ENCODE measurements at regions of chr5 and their contacts with region 1.

Region 1: DNA sequence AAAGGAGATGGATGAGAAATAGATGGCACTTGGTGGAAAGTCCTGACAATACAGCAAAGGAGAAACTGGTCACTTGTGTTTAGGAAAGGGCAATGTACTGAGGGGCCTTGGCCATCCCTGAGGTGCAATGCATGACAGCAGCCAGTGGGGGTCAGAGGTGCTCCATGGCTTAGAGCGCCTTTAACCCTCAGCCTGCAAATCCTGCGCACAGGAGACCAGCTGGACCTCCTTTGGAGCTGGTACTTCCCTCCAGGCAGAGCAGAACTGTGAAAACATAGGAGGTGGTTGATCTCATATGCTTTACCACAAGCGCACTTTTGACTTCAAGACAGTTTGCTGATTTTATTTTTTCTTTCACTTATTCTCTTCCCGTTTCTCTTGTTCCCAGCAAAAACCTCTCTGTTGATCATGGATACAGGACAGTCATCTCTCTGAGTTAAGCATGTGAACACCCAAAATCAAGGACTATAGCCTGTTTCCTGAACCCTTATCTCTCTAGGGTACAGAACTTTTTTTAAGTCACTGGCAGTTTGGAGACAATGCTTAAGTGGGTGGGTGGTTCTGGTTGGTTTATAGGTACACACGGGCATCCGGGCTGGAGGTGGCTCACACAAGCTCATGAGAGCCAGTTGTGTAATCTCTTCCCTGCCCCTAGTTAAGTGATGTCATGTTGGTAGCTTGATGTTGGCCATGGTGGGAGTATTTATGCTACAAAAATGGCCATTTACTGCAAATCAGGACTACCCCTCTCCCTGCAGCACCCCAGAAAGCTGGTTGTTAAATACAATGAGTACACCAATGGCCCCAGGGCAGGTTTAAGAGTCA is 37.6 kb upstream of the ANKRD55 start:
- DNase-seq: peak; percentile 93
- ATAC-seq: peak; percentile 99
- H3K4me3 ChIP-seq: no peak overlapping the region
- H3K27ac ChIP-seq: peak overlapping the region; percentile 80
- H3K4me1 ChIP-seq: peaks cover 11% of the 10 kb centered on the region
- H3K27me3 ChIP-seq: no peaks in the 10 kb centered on the region
- CTCF ChIP-seq: peak; percentile 98
- POLR2A ChIP-seq: peak; percentile 64; the same call in 1 of the 2 replicates
- RAD21 ChIP-seq: peak; percentile 100

Region 2: DNA sequence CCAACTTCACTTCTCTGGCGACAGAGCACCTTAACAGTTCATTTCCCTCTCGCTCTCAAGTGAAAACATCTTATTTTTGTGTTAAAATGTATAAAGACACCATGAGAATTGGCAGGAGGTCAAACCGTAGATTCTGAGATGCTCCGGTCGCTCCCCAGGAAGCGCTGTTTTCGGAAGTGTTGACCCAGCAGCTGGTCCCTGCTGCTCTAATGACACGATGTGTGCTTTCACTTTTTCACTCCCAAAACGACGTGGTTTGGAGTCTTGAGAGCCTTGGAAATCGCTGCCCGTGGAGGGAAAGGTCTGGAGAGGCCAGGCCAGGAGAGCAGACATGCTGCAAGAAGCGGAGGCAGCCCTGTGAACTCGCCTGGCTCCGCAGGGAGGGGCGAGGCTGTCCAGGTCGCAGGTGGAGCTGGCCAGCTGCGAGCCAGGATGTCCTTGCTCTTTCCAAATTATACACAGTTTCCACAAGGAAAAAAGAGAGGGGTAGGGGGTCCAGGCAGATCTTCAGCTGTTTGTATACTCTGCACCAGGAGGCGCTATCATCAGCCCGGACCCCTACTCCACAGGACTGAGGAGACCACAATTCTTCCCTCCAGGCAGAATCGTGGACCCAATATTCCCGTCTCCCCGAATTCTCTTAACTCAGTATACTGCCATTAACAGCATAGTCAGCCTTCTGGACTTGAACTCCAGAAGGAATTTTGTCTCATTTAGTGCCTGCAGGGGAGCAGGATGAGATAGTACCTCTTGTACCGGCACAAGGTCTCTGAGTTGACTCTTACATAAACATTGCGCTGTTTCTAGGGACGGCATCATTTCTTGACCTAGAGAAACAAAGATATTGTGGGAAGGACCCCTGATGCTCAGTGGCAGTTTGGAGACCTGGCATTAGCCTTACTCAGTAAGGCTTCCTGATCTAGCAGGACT is 210.9 kb after region 1 on chr5:
- CTCF ChIA-PET with region 1: no interaction called
- POLR2A ChIA-PET with region 1: interaction called, 3 read pairs
- dilution Hi-C with region 1: no loop called
- in situ Hi-C with region 1: no loop called
- intact Hi-C with region 1: loop called (anchors 2 kb)
- DNase-seq: peak; percentile 54
- ATAC-seq: peak; percentile 31
- H3K4me3 ChIP-seq: peak overlapping the region; percentile 37
- H3K27ac ChIP-seq: peak overlapping the region; percentile 58
- H3K4me1 ChIP-seq: peaks cover 21% of the 10 kb centered on the region
- H3K27me3 ChIP-seq: no peaks in the 10 kb centered on the region
- CTCF ChIP-seq: peak; percentile 27; the same call in 1 of the 2 replicates
- POLR2A ChIP-seq: 0 out of 2 replicates have a peak, but pooled peaks have one; percentile 42
- RAD21 ChIP-seq: peak; percentile 12; the same call in 1 of the 2 replicates

Region 3: DNA sequence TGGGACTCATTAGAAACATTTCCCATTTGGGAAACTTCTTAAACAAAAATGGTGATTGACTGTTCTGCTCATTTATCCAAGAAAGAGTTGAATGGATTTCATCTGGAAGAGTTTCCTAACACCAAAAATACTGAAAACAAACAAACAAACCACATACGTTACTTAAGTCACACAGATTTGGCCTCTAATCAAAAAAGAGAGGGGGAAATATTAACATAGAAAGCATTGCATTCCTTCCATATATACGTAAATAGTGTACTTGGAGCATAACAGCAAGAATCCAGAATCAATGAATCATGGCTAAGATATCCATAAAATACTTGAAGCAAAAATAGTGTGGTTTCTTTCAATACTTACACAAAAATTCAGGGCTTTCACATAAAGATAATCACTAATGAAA is 354.8 kb after region 1 on chr5:
- CTCF ChIA-PET with region 1: no interaction called
- POLR2A ChIA-PET with region 1: no interaction called
- dilution Hi-C with region 1: no loop called
- in situ Hi-C with region 1: no loop called
- intact Hi-C with region 1: loop called (anchors 5 kb)
- DNase-seq: peak; percentile 96
- ATAC-seq: peak; percentile 85
- H3K4me3 ChIP-seq: no peak overlapping the region
- H3K27ac ChIP-seq: peak overlapping the region; percentile 71; the same call in 1 of the 2 replicates
- H3K4me1 ChIP-seq: peaks cover 1% of the 10 kb centered on the region; the same call in 1 of the 2 replicates
- H3K27me3 ChIP-seq: no peaks in the 10 kb centered on the region
- CTCF ChIP-seq: no peak
- POLR2A ChIP-seq: no peak
- RAD21 ChIP-seq: no peak

Region 4: GRCh38 chr5:56838409-56839039 is 567.7 kb after region 1 on chr5:
- CTCF ChIA-PET with region 1: interaction called, 46 read pairs
- POLR2A ChIA-PET with region 1: no interaction called
- dilution Hi-C with region 1: no loop called
- in situ Hi-C with region 1: loop called (anchors 5 kb)
- intact Hi-C with region 1: loop called (anchors 1 kb)
- DNase-seq: peak; percentile 74
- ATAC-seq: peak; percentile 67
- H3K4me3 ChIP-seq: peak overlapping the region; percentile 47; the same call in 1 of the 2 replicates
- H3K27ac ChIP-seq: peak overlapping the region; percentile 62; the same call in 1 of the 2 replicates
- H3K4me1 ChIP-seq: peaks cover 11% of the 10 kb centered on the region
- H3K27me3 ChIP-seq: no peaks in the 10 kb centered on the region
- CTCF ChIP-seq: peak; percentile 68
- POLR2A ChIP-seq: no peak
- RAD21 ChIP-seq: peak; percentile 83

Region 5: DNA sequence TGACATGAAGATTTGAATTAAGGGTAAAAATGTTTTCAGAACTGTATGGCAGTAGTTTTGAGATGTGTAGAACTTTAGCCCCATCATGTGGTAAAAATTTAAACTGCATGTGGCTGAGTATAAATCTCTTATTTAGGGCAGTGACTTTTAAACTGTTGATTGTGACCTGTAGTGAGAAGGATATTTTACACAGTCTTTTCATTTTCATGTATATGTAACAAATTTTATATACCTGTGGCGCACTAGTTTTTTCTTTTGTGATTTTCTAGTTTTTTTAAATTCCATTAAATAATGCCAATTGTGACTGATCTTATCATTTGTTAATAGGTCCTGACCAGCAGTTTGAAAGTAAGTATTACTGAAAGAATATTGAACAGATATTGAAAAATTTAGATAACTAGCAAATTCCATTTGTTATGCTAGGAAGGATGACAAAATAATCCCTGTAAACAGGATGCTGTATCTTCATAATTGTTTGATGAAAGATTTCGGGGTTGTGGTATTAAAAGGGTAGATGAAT is 950.3 kb after region 1 on chr5:
- CTCF ChIA-PET with region 1: no interaction called
- POLR2A ChIA-PET with region 1: no interaction called
- dilution Hi-C with region 1: no loop called
- in situ Hi-C with region 1: loop called (anchors 25 kb)
- intact Hi-C with region 1: loop called (anchors 2 kb)
- DNase-seq: peak; percentile 65
- ATAC-seq: peak; percentile 86
- H3K4me3 ChIP-seq: no peak overlapping the region
- H3K27ac ChIP-seq: no peak overlapping the region
- H3K4me1 ChIP-seq: peaks cover 8% of the 10 kb centered on the region
- H3K27me3 ChIP-seq: no peaks in the 10 kb centered on the region
- CTCF ChIP-seq: peak; percentile 93
- POLR2A ChIP-seq: no peak
- RAD21 ChIP-seq: peak; percentile 91